ENCODE measurements at regions of chr6 and their contacts with region 1.

Region 1: GRCh38 chr6:26243752-26244151 is 121.2 kb upstream of the BTN3A2 start:
- DNase-seq: no peak
- H3K4me3 ChIP-seq: no peak overlapping the region
- H3K27ac ChIP-seq: no peak overlapping the region
- H3K4me1 ChIP-seq: peaks cover 0 to 4% (median 0%) of the 10 kb centered on the region in 4 donors
- H3K27me3 ChIP-seq: peaks cover 7 to 56% (median 20%) of the 10 kb centered on the region in 3 donors
- CTCF ChIP-seq: no peak
- EP300 ChIP-seq: no peak
- POLR2A ChIP-seq: no peak

Region 2: GRCh38 chr6:26232938-26233648 is 10.7 kb before region 1 on chr6:
- intact Hi-C with region 1: no loop called
- DNase-seq: no peak
- H3K4me3 ChIP-seq: peak overlapping the region; percentile 45 to 57 (median 55)
- H3K27ac ChIP-seq: peak overlapping the region; percentile 81 to 90 (median 86)
- H3K4me1 ChIP-seq: peaks cover 0 to 20% (median 13%) of the 10 kb centered on the region in 4 donors
- H3K27me3 ChIP-seq: peaks cover 7 to 53% (median 17%) of the 10 kb centered on the region in 3 donors
- CTCF ChIP-seq: no peak
- EP300 ChIP-seq: no peak
- POLR2A ChIP-seq: no peak

Region 3: GRCh38 chr6:26280407-26280806 is 36.7 kb after region 1 on chr6:
- intact Hi-C with region 1: loop called (anchors 2 kb)
- DNase-seq: no peak
- H3K4me3 ChIP-seq: no peak overlapping the region
- H3K27ac ChIP-seq: no peak overlapping the region
- H3K4me1 ChIP-seq: peaks cover 0 to 17% (median 16%) of the 10 kb centered on the region in 4 donors
- H3K27me3 ChIP-seq: peaks cover 0 to under 1% (median 0%) of the 10 kb centered on the region in 3 donors
- CTCF ChIP-seq: no peak
- EP300 ChIP-seq: no peak
- POLR2A ChIP-seq: no peak

Region 4: GRCh38 chr6:26394289-26394688 is 150.5 kb after region 1 on chr6:
- intact Hi-C with region 1: no loop called
- DNase-seq: no peak
- H3K4me3 ChIP-seq: no peak overlapping the region
- H3K27ac ChIP-seq: no peak overlapping the region
- H3K4me1 ChIP-seq: no peaks in the 10 kb centered on the region
- H3K27me3 ChIP-seq: no peaks in the 10 kb centered on the region
- CTCF ChIP-seq: no peak
- EP300 ChIP-seq: no peak
- POLR2A ChIP-seq: no peak

Measured in sigmoid colon (tissue), 7 donors.